ENCODE measurements at regions of chr6 and their contacts with region 1.

Region 1: GRCh38 chr6:26122793-26123674 is 35.8 kb downstream of the HFE start:
- DNase-seq: peak; percentile 99
- H3K4me3 ChIP-seq: peak overlapping the region; percentile 72
- H3K27ac ChIP-seq: peak overlapping the region; percentile 99
- H3K4me1 ChIP-seq: peaks cover 60% of the 10 kb centered on the region
- CTCF ChIP-seq: no peak

Region 2: DNA sequence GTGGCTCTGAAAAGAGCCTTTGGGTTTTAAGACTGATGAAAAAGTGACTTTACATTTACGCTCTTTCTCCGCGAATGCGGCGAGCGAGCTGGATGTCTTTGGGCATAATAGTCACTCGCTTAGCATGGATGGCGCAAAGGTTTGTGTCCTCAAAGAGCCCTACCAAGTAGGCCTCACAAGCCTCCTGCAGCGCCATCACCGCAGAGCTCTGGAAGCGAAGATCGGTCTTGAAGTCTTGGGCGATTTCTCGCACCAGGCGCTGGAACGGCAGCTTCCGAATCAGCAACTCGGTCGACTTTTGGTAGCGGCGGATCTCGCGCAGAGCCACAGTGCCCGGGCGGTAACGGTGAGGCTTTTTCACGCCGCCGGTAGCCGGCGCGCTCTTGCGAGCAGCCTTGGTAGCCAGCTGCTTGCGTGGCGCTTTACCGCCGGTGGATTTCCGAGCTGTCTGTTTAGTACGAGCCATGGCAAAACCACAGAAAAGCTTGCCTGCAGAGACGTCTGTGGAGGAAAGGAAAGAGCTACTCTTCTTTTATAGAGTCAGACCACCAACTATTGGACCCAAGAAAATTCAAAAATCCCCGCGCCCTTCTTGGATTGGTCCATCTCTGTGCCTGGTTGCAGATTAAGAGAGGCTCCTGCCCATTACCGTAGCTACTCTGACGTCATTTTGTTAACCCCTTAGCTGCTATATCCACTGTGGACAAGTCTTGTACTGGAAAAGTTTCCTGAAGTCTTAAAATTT is 91.3 kb before region 1 on chr6:
- CTCF ChIA-PET with region 1: no interaction called
- POLR2A ChIA-PET with region 1: interaction called, 85 read pairs
- intact Hi-C with region 1: no loop called
- DNase-seq: peak; percentile 99
- H3K4me3 ChIP-seq: peak overlapping the region; percentile 78
- H3K27ac ChIP-seq: peak overlapping the region; percentile 99
- H3K4me1 ChIP-seq: peaks cover 74% of the 10 kb centered on the region
- CTCF ChIP-seq: 0 out of 2 replicates have a peak, but pooled peaks have one; percentile 33

Region 3: GRCh38 chr6:26103770-26104456 is 19.1 kb before region 1 on chr6:
- CTCF ChIA-PET with region 1: no interaction called
- POLR2A ChIA-PET with region 1: interaction called, 44 read pairs
- intact Hi-C with region 1: loop called (anchors 1 kb)
- DNase-seq: peak; percentile 94
- H3K4me3 ChIP-seq: peak overlapping the region; percentile 66
- H3K27ac ChIP-seq: peak overlapping the region; percentile 96
- H3K4me1 ChIP-seq: peaks cover 25% of the 10 kb centered on the region
- CTCF ChIP-seq: peak; percentile 65

Region 4: DNA sequence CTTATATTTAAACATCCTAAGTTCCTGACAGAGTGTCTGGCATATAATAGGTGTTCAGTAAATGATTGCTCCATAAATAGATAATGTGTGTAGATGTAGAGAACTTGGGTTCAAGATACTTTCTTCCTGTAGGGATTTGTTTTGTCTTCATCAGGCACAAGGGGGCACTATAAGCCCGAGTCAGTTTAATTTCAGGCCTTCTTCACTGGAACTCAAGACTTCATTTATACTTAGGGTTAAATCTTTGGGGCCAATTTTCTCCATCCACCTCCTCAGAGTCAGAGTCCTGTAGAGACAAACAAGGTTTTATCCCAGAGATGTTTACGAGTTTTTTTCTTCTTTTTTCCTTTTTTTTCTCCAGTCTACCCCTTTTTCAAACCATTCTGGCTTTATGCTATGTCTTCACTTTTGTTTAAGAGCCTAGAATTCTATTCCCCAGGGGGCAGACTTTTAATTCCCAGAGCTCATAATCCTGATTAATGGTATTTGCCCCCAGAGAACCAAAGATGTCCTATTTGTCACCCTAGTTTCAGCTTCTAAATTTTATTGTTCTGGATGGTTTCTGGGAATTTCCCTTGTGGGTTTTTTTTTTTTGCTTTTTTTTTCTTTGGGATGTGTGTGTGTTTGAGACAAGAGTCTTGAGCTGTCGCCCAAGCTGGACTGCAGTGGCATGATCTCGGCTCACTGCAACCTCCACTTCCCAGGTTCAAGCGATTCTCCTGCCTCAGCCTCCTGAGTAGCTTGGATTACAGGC is 52.6 kb after region 1 on chr6:
- CTCF ChIA-PET with region 1: no interaction called
- POLR2A ChIA-PET with region 1: interaction called, 15 read pairs
- intact Hi-C with region 1: no loop called
- DNase-seq: peak; percentile 79
- H3K4me3 ChIP-seq: peak overlapping the region; percentile 74
- H3K27ac ChIP-seq: peak overlapping the region; percentile 94
- H3K4me1 ChIP-seq: peaks cover 30% of the 10 kb centered on the region
- CTCF ChIP-seq: peak; percentile 95

Region 5: GRCh38 chr6:26216356-26216885 is 93.4 kb after region 1 on chr6:
- CTCF ChIA-PET with region 1: no interaction called
- POLR2A ChIA-PET with region 1: interaction called, 28 read pairs
- intact Hi-C with region 1: loop called (anchors 1 kb)
- DNase-seq: peak; percentile 98
- H3K4me3 ChIP-seq: peak overlapping the region; percentile 79
- H3K27ac ChIP-seq: peak overlapping the region; percentile 99
- H3K4me1 ChIP-seq: peaks cover 63% of the 10 kb centered on the region
- CTCF ChIP-seq: no peak

Region 6: GRCh38 chr6:27809939-27810767 is 1687.1 kb after region 1 on chr6:
- CTCF ChIA-PET with region 1: no interaction called
- POLR2A ChIA-PET with region 1: interaction called, 3 read pairs
- intact Hi-C with region 1: loop called (anchors 5 kb)
- DNase-seq: peak; percentile 96
- H3K4me3 ChIP-seq: peak overlapping the region; percentile 82
- H3K27ac ChIP-seq: peak overlapping the region; percentile 96
- H3K4me1 ChIP-seq: peaks cover 62% of the 10 kb centered on the region
- CTCF ChIP-seq: peak; percentile 12; the same call in 1 of the 2 replicates